ENCODE measurements at regions of chr4 and their contacts with region 1.

Region 1: GRCh38 chr4:142353149-142353738 is 492.9 kb downstream of the INPP4B start:
- DNase-seq: no peak
- ATAC-seq: peak; percentile 20
- H3K4me3 Mint-ChIP-seq: peak overlapping the region; percentile 37
- H3K27ac Mint-ChIP-seq: peak overlapping the region; percentile 97
- H3K4me1 Mint-ChIP-seq: peaks cover 97% of the 10 kb centered on the region
- H3K27me3 Mint-ChIP-seq: no peaks in the 10 kb centered on the region

Region 2: GRCh38 chr4:142077048-142077447 is 276.2 kb before region 1 on chr4:
- CTCF ChIA-PET with region 1: no interaction called
- POLR2A ChIA-PET with region 1: no interaction called
- intact Hi-C with region 1: no loop called
- DNase-seq: no peak
- ATAC-seq: no peak
- H3K4me3 Mint-ChIP-seq: no peak overlapping the region
- H3K27ac Mint-ChIP-seq: no peak overlapping the region
- H3K4me1 Mint-ChIP-seq: no peaks in the 10 kb centered on the region
- H3K27me3 Mint-ChIP-seq: no peaks in the 10 kb centered on the region

Region 3: GRCh38 chr4:142155347-142155746 is 197.9 kb before region 1 on chr4:
- CTCF ChIA-PET with region 1: no interaction called
- POLR2A ChIA-PET with region 1: no interaction called
- intact Hi-C with region 1: no loop called
- DNase-seq: no peak
- ATAC-seq: no peak
- H3K4me3 Mint-ChIP-seq: no peak overlapping the region
- H3K27ac Mint-ChIP-seq: no peak overlapping the region
- H3K4me1 Mint-ChIP-seq: peaks cover 16% of the 10 kb centered on the region
- H3K27me3 Mint-ChIP-seq: no peaks in the 10 kb centered on the region

Region 4: GRCh38 chr4:142365387-142365786 is 12.1 kb after region 1 on chr4:
- CTCF ChIA-PET with region 1: interaction called, 94 read pairs
- POLR2A ChIA-PET with region 1: no interaction called
- intact Hi-C with region 1: loop called in 1 of 2 experiments (anchors 1 kb)
- DNase-seq: no peak
- ATAC-seq: peak; percentile 51
- H3K4me3 Mint-ChIP-seq: no peak overlapping the region
- H3K27ac Mint-ChIP-seq: peak overlapping the region; percentile 74
- H3K4me1 Mint-ChIP-seq: peaks cover 76% of the 10 kb centered on the region
- H3K27me3 Mint-ChIP-seq: no peaks in the 10 kb centered on the region

Region 5: GRCh38 chr4:142379277-142380057 is 26.2 kb after region 1 on chr4:
- CTCF ChIA-PET with region 1: interaction called, 73 read pairs
- POLR2A ChIA-PET with region 1: no interaction called
- intact Hi-C with region 1: loop called (anchors 2 kb)
- DNase-seq: no peak
- ATAC-seq: no peak
- H3K4me3 Mint-ChIP-seq: no peak overlapping the region
- H3K27ac Mint-ChIP-seq: peak overlapping the region; percentile 93
- H3K4me1 Mint-ChIP-seq: peaks cover 83% of the 10 kb centered on the region
- H3K27me3 Mint-ChIP-seq: no peaks in the 10 kb centered on the region

Region 6: GRCh38 chr4:142549726-142550463 is 196.7 kb after region 1 on chr4:
- CTCF ChIA-PET with region 1: interaction called, 5 read pairs
- POLR2A ChIA-PET with region 1: no interaction called
- intact Hi-C with region 1: loop called in 1 of 2 experiments (anchors 5 kb)
- DNase-seq: no peak
- ATAC-seq: peak; percentile 83
- H3K4me3 Mint-ChIP-seq: no peak overlapping the region
- H3K27ac Mint-ChIP-seq: peak overlapping the region; percentile 86
- H3K4me1 Mint-ChIP-seq: peaks cover 66% of the 10 kb centered on the region
- H3K27me3 Mint-ChIP-seq: no peaks in the 10 kb centered on the region

Region 7: GRCh38 chr4:142817442-142817841 is 464.2 kb after region 1 on chr4:
- CTCF ChIA-PET with region 1: interaction called, 3 read pairs
- POLR2A ChIA-PET with region 1: no interaction called
- intact Hi-C with region 1: loop called in 1 of 2 experiments (anchors 5 kb)
- DNase-seq: peak; percentile 77
- ATAC-seq: peak; percentile 88
- H3K4me3 Mint-ChIP-seq: peak overlapping the region; percentile 18
- H3K27ac Mint-ChIP-seq: peak overlapping the region; percentile 82
- H3K4me1 Mint-ChIP-seq: peaks cover 32% of the 10 kb centered on the region
- H3K27me3 Mint-ChIP-seq: no peaks in the 10 kb centered on the region

Measured in activated CD4-positive, alpha-beta T cell treated with anti-CD3 and anti-CD28 coated beads for 36 hours (primary cell).